Activated CD8-positive, alpha-beta T cell treated with anti-CD3 and anti-CD28 coated beads, Interleukin-2, amount 10 ng/mL, durations not matched to agents 7 days and 5 days (primary cell): ENCODE measurements at regions of chr2 and their contacts with region 1.

Region 1: DNA sequence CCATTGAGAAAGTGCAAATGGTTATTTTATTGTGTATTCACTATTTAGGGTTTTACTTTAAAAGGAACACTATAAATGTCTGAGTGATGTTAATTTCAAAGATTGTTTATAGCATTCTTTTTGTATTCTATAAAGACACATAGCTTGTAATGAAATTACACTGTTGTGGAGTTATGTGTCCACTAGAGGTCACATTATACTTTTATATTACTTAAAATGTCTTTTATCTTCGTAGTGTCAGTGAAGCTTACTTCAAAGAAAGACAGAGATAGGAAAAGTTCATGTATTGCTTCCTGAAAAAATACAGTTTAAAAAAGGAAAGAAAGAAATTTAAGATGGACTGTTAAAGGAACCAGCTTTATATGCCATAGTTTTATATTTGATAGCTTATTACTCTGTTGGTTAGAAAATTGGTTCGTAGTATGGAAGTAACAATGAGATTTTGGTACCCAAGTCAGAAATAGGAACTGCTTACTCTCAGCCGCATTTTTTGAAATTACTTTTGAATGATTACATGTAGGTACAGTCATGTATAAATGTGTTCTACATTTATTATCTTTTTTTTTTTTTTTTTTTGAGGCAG is 20.5 kb downstream of the APLF start:
- DNase-seq: no peak
- ATAC-seq: peak; percentile 49
- H3K4me3 Mint-ChIP-seq: no peak overlapping the region
- H3K27ac Mint-ChIP-seq: no peak overlapping the region
- H3K4me1 Mint-ChIP-seq: peaks cover 3% of the 10 kb centered on the region
- H3K27me3 Mint-ChIP-seq: no peaks in the 10 kb centered on the region

Region 2: GRCh38 chr2:68506170-68506569 is 18.3 kb after region 1 on chr2:
- CTCF ChIA-PET with region 1: interaction called, 17 read pairs
- POLR2A ChIA-PET with region 1: no interaction called
- DNase-seq: no peak
- ATAC-seq: no peak
- H3K4me3 Mint-ChIP-seq: no peak overlapping the region
- H3K27ac Mint-ChIP-seq: no peak overlapping the region
- H3K4me1 Mint-ChIP-seq: peaks cover 10% of the 10 kb centered on the region
- H3K27me3 Mint-ChIP-seq: no peaks in the 10 kb centered on the region

Region 3: DNA sequence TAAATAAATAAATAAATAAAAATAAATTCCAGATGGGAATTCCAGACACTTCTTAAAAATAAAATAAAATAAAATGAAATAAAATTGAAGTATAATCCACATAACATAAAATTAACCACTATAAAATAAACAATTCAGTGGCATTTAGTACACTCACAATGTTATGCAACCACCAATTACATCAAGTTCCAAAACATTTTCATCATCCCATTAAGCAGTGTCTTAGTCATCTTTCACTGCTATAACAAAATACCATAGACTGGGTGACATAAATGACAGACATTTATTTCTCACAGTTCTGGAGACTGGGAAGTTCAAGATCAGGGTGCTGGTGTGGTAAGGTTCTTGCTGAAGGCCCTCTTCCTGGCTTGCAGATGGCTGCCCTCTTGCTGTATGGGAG is 132.9 kb after region 1 on chr2:
- CTCF ChIA-PET with region 1: no interaction called
- POLR2A ChIA-PET with region 1: no interaction called
- DNase-seq: no peak
- ATAC-seq: no peak
- H3K4me3 Mint-ChIP-seq: no peak overlapping the region
- H3K27ac Mint-ChIP-seq: no peak overlapping the region
- H3K4me1 Mint-ChIP-seq: no peaks in the 10 kb centered on the region
- H3K27me3 Mint-ChIP-seq: no peaks in the 10 kb centered on the region